Ovary (tissue), 10 donors: ENCODE measurements at regions of chr6 and their contacts with region 1.

Region 1: GRCh38 chr6:151690768-151691562 is 116.5 kb upstream of the ESR1 start:
- DNase-seq: no peak
- H3K4me3 ChIP-seq: peak overlapping the region; percentile 29
- H3K27ac ChIP-seq: peak overlapping the region; percentile 69 to 88
- H3K4me1 ChIP-seq: peaks cover 3% of the 10 kb centered on the region
- H3K27me3 ChIP-seq: no peaks in the 10 kb centered on the region
- CTCF ChIP-seq: no peak
- EP300 ChIP-seq: no peak
- POLR2A ChIP-seq: no peak

Region 2: DNA sequence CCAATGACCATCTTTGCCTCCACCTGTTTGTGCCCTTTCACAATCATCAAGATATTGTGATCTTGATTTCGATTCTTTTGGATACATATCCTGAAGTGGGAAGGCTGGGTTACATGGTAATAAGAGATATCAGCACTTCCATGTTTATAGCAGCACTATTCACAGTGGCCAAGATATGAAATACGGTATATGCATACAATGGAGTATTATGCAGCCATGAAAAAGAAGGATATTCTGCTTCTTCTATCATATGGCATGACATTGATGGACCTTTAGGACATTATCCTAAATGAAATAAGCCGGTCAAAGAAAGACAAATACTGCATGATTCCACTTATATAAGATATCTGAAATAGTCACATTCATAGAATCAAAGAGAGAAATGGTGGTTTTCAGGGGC is 53.2 kb before region 1 on chr6:
- intact Hi-C with region 1: no loop called
- DNase-seq: no peak
- H3K4me3 ChIP-seq: no peak overlapping the region
- H3K27ac ChIP-seq: no peak overlapping the region
- H3K4me1 ChIP-seq: no peaks in the 10 kb centered on the region
- H3K27me3 ChIP-seq: no peaks in the 10 kb centered on the region
- CTCF ChIP-seq: no peak
- EP300 ChIP-seq: no peak
- POLR2A ChIP-seq: no peak

Region 3: GRCh38 chr6:151647976-151648639 is 42.9 kb before region 1 on chr6:
- intact Hi-C with region 1: no loop called
- DNase-seq: no peak
- H3K4me3 ChIP-seq: no peak overlapping the region
- H3K27ac ChIP-seq: no peak overlapping the region
- H3K4me1 ChIP-seq: peaks cover 2% of the 10 kb centered on the region
- H3K27me3 ChIP-seq: no peaks in the 10 kb centered on the region
- CTCF ChIP-seq: no peak
- EP300 ChIP-seq: no peak
- POLR2A ChIP-seq: no peak

Region 4: DNA sequence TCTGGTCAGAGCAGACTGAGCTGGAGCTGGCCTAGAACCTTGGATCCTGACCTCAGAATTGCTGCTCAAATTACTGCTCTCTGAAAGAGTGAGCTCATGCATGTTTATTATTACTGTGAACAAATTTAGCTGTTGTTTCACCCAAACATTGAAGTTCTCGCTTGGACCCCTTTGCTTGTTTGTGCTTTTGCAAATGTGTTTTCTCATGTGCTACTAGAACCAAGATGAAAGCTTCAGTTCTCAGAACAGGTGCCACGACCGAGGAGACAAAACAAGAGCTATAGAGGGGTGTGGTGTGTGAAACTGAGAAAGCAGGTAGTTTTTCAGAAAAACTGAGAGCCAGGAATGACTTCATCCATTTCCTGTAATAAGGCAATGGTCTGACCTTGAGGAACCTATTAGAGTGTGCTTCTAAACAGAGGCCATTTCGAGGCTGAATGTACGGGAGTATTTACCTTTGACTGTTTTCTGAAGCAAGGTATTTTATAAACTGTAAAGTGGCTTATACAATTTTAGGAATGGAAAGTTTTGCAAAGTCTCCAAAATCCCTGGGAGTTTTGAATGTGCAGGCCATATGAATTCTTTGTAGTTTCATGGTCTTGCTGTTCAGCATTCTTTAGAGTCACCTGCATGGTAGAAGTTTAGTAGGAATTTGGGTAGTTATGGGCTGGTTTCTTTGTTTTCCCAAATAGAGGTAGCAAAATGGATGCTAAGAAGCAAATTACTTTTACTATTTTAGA is 66.7 kb after region 1 on chr6:
- intact Hi-C with region 1: loop called in 2 of 4 experiments (anchors 5 to 10 kb)
- DNase-seq: no peak
- H3K4me3 ChIP-seq: no peak overlapping the region
- H3K27ac ChIP-seq: peak overlapping the region in 1 of 2 donors; percentile 65
- H3K4me1 ChIP-seq: peaks cover 9% of the 10 kb centered on the region
- H3K27me3 ChIP-seq: no peaks in the 10 kb centered on the region
- CTCF ChIP-seq: no peak
- EP300 ChIP-seq: no peak
- POLR2A ChIP-seq: no peak

Region 5: GRCh38 chr6:151765444-151765886 is 74.5 kb after region 1 on chr6:
- intact Hi-C with region 1: loop called in 1 of 4 experiments (anchors 5 kb)
- DNase-seq: peak in 3 of 5 donors; percentile 23 to 69 (median 48)
- H3K4me3 ChIP-seq: no peak overlapping the region
- H3K27ac ChIP-seq: no peak overlapping the region
- H3K4me1 ChIP-seq: peaks cover 1% of the 10 kb centered on the region
- H3K27me3 ChIP-seq: no peaks in the 10 kb centered on the region
- CTCF ChIP-seq: peak; percentile 71
- EP300 ChIP-seq: no peak
- POLR2A ChIP-seq: no peak

Region 6: GRCh38 chr6:151796842-151797530 is 106.0 kb after region 1 on chr6:
- intact Hi-C with region 1: no loop called
- DNase-seq: peak in 1 of 5 donors; percentile 31
- H3K4me3 ChIP-seq: no peak overlapping the region
- H3K27ac ChIP-seq: no peak overlapping the region
- H3K4me1 ChIP-seq: peaks cover 5% of the 10 kb centered on the region
- H3K27me3 ChIP-seq: no peaks in the 10 kb centered on the region
- CTCF ChIP-seq: no peak
- EP300 ChIP-seq: peak; percentile 5
- POLR2A ChIP-seq: no peak

Region 7: GRCh38 chr6:152124429-152125074 is 433.6 kb after region 1 on chr6:
- intact Hi-C with region 1: loop called in 1 of 4 experiments (anchors 5 kb)
- DNase-seq: no peak
- H3K4me3 ChIP-seq: no peak overlapping the region
- H3K27ac ChIP-seq: no peak overlapping the region
- H3K4me1 ChIP-seq: peaks cover 8% of the 10 kb centered on the region
- H3K27me3 ChIP-seq: no peaks in the 10 kb centered on the region
- CTCF ChIP-seq: peak; percentile 53 to 86 (median 69)
- EP300 ChIP-seq: no peak
- POLR2A ChIP-seq: no peak

Region 8: DNA sequence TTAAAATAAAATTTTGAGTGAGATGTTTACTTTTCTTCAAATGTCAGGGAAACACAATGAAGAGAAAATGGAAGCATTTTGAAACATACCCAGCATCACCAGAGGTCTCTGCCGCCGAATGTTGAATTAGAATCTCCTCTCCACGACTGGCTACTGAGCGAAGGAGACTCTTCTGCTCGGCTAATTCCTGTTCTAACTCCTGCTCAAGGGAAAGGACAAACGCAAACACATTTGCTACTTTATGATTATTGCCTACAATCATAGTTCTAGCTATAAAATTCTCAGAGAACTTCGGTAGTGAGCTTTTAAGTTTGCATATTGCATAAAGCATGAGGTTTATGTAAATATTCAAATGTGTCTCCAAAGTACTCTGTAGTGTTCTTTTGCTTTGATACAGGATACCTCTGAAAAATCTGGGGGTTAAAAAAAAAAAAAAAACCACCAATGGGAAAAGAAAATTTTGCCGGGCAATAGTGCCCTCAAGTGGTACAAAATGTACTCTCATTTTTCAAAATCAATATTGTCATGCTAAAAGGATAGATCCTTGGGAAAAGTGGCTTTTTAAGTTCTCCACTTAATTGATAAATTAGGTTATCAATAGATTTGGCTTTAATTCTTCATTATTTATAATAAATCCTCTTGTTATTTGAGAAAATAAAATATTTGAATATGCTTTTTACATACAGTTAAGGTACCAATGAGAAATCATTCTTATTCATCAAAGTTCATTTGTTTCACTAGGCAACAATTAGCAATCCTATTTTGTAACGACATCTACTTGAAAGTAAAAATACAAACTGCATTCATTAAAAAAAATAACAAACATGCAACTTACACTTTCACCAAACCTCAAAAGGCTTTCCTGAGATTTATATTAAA is 577.2 kb after region 1 on chr6:
- intact Hi-C with region 1: loop called in 1 of 4 experiments (anchors 10 kb)
- DNase-seq: peak in 1 of 5 donors; percentile 49
- H3K4me3 ChIP-seq: peak overlapping the region; percentile 19
- H3K27ac ChIP-seq: peak overlapping the region in 1 of 2 donors; percentile 11
- H3K4me1 ChIP-seq: peaks cover 13% of the 10 kb centered on the region
- H3K27me3 ChIP-seq: no peaks in the 10 kb centered on the region
- CTCF ChIP-seq: peak; percentile 21 to 46 (median 22)
- EP300 ChIP-seq: no peak
- POLR2A ChIP-seq: no peak